Aorta (tissue), 5 donors: ENCODE measurements at regions of chr19 and their contacts with region 1.

Region 1: DNA sequence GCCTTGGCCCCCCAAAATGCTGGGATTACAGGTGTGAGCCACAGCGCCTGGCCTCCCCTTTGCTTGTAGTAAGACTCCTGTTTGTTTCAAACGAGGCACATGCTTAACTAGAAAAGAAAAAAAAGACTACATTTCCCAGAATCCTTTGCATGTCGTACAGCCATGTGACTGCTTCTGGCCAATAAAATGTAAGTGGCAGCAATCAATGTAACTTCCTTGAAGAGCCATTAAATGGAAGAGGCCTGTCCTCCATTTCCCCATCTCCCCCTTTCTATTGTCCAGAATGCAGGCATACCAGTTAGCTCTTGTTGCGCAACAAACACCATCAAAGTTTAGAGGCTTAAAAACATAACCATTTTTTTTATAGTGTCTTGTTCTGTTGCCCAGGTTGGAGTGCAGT is 10.4 kb upstream of the GPR32 start:
- DNase-seq: no peak
- ATAC-seq: no peak
- H3K4me3 ChIP-seq: no peak overlapping the region
- H3K27ac ChIP-seq: no peak overlapping the region
- H3K4me1 ChIP-seq: no peaks in the 10 kb centered on the region
- H3K27me3 ChIP-seq: no peaks in the 10 kb centered on the region

Region 2: GRCh38 chr19:50817941-50818858 is 58.3 kb after region 1 on chr19:
- intact Hi-C with region 1: loop called in 1 of 2 experiments (anchors 2 kb)
- DNase-seq: no peak
- ATAC-seq: peak; percentile 30
- H3K4me3 ChIP-seq: no peak overlapping the region
- H3K27ac ChIP-seq: no peak overlapping the region
- H3K4me1 ChIP-seq: no peaks in the 10 kb centered on the region
- H3K27me3 ChIP-seq: no peaks in the 10 kb centered on the region

Region 3: DNA sequence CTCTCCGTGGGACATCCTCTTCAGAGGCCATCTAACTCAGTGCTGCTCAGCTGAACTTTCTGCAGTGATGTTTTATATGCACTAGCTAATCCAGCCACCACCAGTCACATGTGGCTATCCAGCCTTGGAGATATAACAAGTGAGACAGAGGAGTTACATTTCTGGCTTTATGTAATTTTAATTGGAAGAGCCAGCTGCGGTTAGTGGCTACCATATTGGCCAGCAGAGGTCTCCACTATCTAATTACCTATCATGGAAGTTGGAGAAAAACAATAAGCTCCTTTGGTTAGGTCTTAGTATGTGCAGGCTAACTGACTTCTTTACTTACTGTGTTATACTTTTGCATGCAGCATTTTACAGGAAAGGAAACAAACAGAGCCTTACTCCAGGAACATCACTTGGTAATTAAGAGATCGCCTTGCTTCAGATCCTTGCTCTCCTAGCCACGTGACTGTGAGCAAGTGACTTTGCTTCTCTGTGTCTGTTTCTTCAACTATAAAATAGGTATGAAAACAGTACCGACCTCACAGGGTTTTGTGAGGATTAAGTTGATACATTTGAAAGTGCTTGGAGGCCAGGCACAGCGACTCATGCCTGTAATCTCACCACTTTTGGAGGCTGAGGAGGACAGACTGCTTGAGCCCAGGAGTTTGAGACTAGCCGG is 261.2 kb after region 1 on chr19:
- intact Hi-C with region 1: no loop called
- DNase-seq: peak; percentile 1 to 7
- ATAC-seq: no peak
- H3K4me3 ChIP-seq: no peak overlapping the region
- H3K27ac ChIP-seq: no peak overlapping the region
- H3K4me1 ChIP-seq: no peaks in the 10 kb centered on the region
- H3K27me3 ChIP-seq: no peaks in the 10 kb centered on the region